Heart left ventricle (tissue), 16 donors: ENCODE measurements at regions of chr7 and their contacts with region 1.

Region 1: DNA sequence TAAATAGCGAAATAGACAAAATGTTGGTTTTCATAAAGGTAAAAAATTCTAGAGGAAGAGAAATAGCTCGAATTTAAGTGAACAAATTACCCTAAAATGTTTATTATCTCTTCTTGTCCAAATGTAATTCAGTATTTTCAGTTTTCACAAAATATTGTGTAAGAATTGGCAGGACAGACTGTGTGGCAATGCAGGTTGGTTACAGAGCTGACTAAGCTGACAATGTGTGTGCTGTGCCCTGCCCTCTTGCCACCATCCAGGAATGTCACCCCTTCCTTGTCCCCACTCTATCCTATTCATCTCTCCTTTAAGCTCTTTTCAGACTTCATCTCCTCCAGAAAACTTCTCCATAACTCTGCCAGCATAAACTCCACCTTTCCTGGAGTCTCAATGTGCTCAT is 46.1 kb downstream of the COL28A1 start:
- DNase-seq: no peak
- ATAC-seq: no peak
- H3K4me3 ChIP-seq: no peak overlapping the region
- H3K27ac ChIP-seq: no peak overlapping the region
- H3K4me1 ChIP-seq: no peaks in the 10 kb centered on the region
- H3K27me3 ChIP-seq: no peaks in the 10 kb centered on the region
- CTCF ChIP-seq: no peak
- POLR2A ChIP-seq: no peak

Region 2: DNA sequence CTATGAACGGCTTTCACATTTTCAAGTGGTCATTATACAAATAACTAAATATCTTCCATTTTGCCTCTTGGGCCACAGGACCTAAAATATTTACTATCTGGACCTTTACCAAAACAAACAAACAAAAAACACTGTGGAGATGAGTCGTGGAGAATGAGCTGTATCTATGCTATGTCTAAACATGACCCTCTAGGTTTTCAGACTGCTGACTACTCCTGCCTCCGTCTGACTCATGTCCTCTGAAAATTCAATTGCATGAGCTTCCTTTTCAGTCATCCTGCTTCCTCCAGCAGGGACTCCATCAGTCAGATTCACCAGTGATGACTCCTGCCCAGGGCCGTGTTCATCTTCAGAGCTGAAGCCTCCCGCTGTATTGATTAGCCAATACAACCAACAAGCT is 50.7 kb before region 1 on chr7:
- intact Hi-C with region 1: loop called in 1 of 10 experiments (anchors 10 kb)
- DNase-seq: no peak
- ATAC-seq: peak in 1 of 4 donors; percentile 68
- H3K4me3 ChIP-seq: no peak overlapping the region
- H3K27ac ChIP-seq: no peak overlapping the region
- H3K4me1 ChIP-seq: peaks cover 0 to 11% (median 0%) of the 10 kb centered on the region in 12 donors
- H3K27me3 ChIP-seq: no peaks in the 10 kb centered on the region
- CTCF ChIP-seq: no peak
- POLR2A ChIP-seq: no peak